Right ventricle myocardium superior (tissue), 1 donor: ENCODE measurements at regions of chr20 and their contacts with region 1.

Region 1: GRCh38 chr20:49028684-49029083 is 17.4 kb upstream of the CSE1L start:
- DNase-seq: no peak
- ATAC-seq: no peak

Region 2: GRCh38 chr20:48769069-48769879 is 259.4 kb before region 1 on chr20:
- intact Hi-C with region 1: no loop called
- DNase-seq: no peak
- ATAC-seq: no peak

Region 3: DNA sequence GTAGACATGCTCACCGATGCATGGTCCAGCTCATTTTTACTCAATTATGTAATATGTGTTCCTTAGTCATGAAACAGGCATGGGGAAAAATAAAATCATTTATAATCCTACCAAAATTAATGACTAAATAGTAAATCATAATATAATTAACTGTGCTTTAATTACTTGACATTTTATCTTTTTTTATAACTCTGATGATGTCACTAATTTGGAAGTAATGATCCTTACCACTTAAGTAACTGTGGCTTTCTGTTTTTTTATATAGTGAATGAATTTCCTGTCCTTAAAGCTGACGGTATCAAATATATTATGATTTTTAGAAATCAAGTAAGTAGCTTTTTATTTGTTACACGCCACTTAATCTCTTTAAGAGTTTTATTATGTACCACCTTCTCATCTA is 49.6 kb after region 1 on chr20:
- intact Hi-C with region 1: loop called (anchors 10 kb)
- DNase-seq: no peak
- ATAC-seq: no peak